SK-N-SH (cell line): ENCODE measurements at regions of chr2 and their contacts with region 1.

Region 1: DNA sequence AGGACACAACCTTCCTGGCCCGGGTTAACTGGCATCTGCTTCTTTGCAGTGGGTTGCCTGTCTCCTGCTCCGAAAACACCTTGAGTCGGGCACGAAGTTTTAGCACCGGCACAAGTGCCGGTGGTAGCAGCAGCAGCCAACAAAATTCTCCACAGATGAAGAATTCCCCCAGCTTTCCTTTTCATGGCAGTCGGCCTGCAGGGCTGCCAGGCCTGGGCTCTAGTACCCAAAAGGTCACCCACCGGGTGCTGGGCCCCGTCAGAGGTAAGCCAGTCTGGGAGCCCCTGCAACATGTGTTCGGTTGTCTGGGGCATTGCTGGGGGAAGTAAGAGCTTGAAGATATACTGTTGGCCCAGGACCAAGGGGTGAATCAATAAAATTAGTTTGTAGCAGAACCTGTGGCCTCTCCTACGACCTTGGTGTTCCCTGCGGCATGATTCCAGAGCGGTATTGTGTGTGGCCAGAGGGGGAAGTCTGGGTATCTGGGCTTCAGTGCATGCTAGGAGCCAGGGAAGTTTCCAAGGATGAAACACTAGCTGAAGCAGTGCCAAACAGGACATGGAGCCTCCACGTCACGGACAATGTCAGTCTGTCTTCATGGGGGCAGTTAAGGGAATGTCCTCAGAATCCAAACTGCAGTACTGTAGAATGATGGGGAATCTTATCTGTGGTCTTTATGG is 7.8 kb downstream of the AGBL5 start:
- DNase-seq: no peak
- H3K4me3 ChIP-seq: no peak overlapping the region
- H3K27ac ChIP-seq: 0 out of 4 replicates have a peak overlapping the region, but pooled peaks of 1 of the 2 experiments have one; percentile 3
- H3K4me1 ChIP-seq: peaks cover 0 to 6% of the 10 kb centered on the region in 2 experiments; a peak in 1 of 4 replicates
- H3K27me3 ChIP-seq: no peaks in the 10 kb centered on the region
- CTCF ChIP-seq: no peak
- EP300 ChIP-seq: no peak
- RAD21 ChIP-seq: no peak

Region 2: GRCh38 chr2:27071277-27071989 is 12.2 kb after region 1 on chr2 and contains the start of gene OST4:
- CTCF ChIA-PET with region 1: interaction called, 216 read pairs
- POLR2A ChIA-PET with region 1: interaction called, 18 read pairs
- DNase-seq: peak; percentile 100
- H3K4me3 ChIP-seq: peak within 1 kb of the TSS; percentile 97 to 98
- H3K27ac ChIP-seq: peak within 1 kb of the TSS; percentile 89 to 98
- H3K4me1 ChIP-seq: peaks cover 44 to 66% of the 10 kb centered on the region in 2 experiments
- H3K27me3 ChIP-seq: no peaks in the 10 kb centered on the region
- CTCF ChIP-seq: peak; percentile 8; the same call in 1 of the 2 replicates
- EP300 ChIP-seq: peak in 1 of 2 experiments; percentile 41; a peak in 1 of 4 replicates
- RAD21 ChIP-seq: no peak
- polyA plus RNA-seq, gene OST4: 876 and 1,851 TPM in 2 replicates